Right ventricle myocardium superior (tissue), 1 donor: ENCODE measurements at regions of chr14 and their contacts with region 1.

Region 1: DNA sequence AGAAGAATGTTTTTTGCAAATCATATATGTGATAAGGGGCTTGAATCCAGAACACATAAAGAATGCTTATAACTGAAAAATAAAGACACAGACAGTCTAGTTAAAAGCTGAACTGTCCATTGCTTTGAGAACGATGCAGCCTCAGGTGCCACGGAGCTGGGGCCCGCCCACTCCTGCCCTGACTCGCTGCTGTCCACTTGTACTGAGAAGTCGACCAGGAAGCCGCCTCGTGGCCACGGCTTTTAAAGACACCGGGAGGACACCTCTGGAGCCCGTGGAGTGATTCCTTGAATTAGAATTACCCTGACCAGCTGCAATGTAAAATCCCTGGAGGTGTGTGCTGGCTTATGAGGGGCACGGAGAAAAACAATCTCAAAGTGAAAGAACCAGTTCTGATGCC is 24.0 kb upstream of the TEX22 start:
- DNase-seq: no peak
- ATAC-seq: no peak

Region 2: DNA sequence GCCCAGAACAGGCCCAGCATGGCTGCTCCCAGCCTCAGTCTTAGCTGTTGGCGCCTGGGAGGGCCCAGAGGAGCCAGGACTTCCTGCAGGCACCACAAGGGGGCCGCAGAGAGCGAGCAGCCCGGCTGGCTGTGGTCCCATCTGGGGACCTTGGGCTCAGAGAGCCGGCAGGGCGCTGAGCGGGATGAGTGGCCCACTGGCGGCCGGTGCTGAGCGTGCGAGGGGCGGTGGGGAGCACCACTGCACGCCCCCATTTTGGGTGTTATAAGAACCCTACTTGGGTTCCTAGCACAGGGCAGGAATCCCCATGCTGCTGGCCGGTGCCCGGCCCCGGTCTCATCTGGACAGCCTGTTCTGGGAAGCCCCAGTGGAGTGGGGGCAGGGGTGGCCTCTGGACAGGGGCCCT is 74.3 kb after region 1 on chr14:
- intact Hi-C with region 1: no loop called
- DNase-seq: peak; percentile 87
- ATAC-seq: peak; percentile 93

Region 3: DNA sequence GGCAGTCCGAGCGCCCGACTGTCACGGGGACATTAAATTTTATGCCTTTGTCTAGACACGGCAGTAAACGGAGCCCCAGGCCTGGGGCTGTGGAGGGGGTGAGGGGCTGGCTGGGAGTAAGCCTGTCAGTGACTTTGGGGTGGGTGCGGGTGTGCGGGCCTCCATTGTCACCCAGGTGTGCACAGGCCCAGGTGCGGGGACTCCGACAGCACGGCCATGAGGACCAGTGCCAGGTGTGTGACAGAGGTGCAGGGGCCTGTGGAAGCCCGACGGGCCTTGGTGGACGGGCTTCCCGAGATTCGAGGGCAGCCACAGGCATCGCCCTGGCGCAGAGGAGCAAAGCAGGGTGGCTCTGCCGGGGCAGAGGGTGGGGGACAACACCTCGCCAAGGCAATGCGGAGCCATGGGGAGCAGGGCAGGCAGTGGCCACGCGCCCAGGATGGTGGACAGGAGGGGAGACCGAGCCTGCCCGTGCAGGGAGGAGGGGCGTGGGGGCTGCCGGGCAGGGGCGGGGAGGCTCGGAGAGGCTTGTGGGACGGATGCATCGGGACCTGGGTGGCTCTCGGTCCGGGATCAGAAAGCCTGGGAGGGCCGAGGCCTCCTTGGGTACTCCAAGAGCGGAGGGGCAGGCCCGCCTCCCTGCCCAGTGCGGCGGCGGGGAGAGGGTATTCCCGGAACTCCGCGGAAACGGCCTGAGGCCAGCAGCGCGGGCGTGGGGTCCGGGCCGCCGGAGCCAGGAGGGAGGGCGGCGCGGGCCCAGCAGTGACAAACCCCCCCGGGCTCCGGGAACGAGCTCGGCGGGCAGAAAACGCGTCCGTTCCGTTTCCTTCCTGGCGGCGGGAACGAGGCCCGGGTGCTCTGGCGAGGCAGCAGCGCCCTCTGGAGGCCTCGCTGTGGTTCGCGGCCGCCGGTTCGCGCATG is 153.5 kb after region 1 on chr14:
- intact Hi-C with region 1: loop called (anchors 5 kb)
- DNase-seq: peak; percentile 89
- ATAC-seq: peak; percentile 90

Region 4: GRCh38 chr14:106094654-106095189 is 720.3 kb after region 1 on chr14:
- intact Hi-C with region 1: no loop called
- DNase-seq: no peak
- ATAC-seq: no peak